Tibial artery (tissue), 4 donors: ENCODE measurements at regions of chr18 and their contacts with region 1.

Region 1: DNA sequence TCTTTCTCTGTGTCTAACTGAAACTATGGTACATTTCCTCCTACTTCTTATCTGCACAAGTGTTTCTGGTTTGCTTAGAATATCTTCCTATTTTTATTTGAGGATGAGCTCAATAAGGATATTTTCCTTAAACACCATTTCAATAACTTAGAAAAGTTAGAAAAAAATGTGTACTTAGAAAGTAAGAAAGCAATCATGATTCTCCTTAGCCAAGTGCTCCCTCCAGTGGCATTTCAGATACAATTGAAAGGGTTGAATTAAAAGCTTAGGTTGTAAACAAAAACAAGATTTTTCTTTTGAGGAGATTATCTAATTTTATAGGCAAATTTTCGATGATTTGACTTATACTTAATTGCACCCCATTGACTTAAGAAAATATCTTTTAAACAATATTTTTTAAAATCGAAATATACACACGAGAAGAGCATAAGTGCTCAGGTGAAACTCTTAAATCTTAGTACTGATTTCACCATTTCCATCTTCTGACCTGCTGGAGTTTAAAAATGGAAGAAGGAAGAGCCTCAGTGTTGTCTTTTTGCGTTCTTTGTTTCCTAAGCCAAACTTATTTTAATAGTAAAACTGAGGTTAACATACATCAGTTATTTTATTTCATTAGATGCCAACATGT is 26.9 kb downstream of the C18orf63 start:
- DNase-seq: no peak
- H3K4me3 ChIP-seq: no peak overlapping the region
- H3K27ac ChIP-seq: no peak overlapping the region
- H3K4me1 ChIP-seq: no peaks in the 10 kb centered on the region
- H3K27me3 ChIP-seq: no peaks in the 10 kb centered on the region
- CTCF ChIP-seq: peak; percentile 59 to 71

Region 2: GRCh38 chr18:74190086-74190485 is 152.4 kb before region 1 on chr18:
- intact Hi-C with region 1: loop called (anchors 5 kb)
- DNase-seq: no peak
- H3K4me3 ChIP-seq: no peak overlapping the region
- H3K27ac ChIP-seq: no peak overlapping the region
- H3K4me1 ChIP-seq: no peaks in the 10 kb centered on the region
- H3K27me3 ChIP-seq: peaks cover 0 to 31% of the 10 kb centered on the region in 2 donors
- CTCF ChIP-seq: no peak